CD4-positive, alpha-beta T cell (primary cell): ENCODE measurements at regions of chr19 and their contacts with region 1.

Region 1: DNA sequence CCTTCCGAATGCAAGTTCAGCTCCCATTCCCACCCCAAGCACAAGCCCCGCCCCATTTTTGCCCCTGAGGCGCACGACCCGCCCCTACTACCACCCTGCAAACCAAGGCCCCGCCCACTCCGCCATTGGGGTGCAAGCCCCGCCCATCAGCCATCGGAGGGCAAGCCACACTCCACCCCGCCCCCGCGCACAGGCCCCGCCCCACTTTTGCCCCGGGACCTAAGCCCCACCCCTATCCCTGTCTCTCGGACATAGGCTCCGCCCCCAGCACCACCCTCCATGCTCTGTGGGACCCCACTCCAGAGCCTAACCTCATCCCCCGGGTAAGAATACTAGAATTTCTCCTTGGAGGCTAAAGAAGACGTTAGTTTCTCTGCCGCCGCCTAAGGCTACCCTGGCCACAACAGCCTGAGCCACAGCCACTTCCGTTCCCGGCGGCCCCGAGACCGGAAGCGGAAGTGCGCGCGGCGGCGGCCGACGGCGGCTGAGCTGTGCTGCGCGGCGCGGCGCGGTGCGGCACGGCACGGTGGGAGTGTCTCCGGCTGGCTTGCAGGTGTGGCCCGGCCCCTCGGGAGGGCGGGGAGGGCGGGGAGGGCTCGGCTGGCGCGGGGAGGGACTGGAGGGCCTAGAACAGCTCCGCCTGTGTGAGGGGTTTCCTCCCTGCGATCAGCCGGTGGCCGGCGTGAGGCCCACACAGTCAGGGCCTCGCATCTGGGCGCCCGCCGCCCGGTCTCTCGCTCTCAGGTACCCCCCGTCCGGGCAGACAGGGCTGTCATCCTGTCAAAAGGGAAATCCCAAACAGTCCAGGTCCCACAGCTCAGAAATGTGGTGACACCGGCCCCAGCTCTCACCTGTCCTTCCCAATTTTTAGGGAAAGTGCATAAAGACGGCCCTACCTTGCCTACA is at the start of gene ZNF333:
- DNase-seq: peak; percentile 94 to 99 (median 98)
- ATAC-seq: peak; percentile 88
- H3K4me3 ChIP-seq: peak within 1 kb of the TSS; percentile 81
- H3K4me3 Mint-ChIP-seq: peak within 1 kb of the TSS; percentile 96
- H3K27ac ChIP-seq: peak within 1 kb of the TSS; percentile 87 to 98
- H3K27ac Mint-ChIP-seq: peak within 1 kb of the TSS; percentile 99
- H3K4me1 ChIP-seq: peaks cover 19% of the 10 kb centered on the region
- H3K4me1 Mint-ChIP-seq: peaks cover 31% of the 10 kb centered on the region
- H3K27me3 ChIP-seq: no peaks in the 10 kb centered on the region
- H3K27me3 Mint-ChIP-seq: no peaks in the 10 kb centered on the region
- CTCF ChIP-seq: no peak
- total RNA-seq, gene ZNF333: 15.5 to 17.6 TPM

Region 2: DNA sequence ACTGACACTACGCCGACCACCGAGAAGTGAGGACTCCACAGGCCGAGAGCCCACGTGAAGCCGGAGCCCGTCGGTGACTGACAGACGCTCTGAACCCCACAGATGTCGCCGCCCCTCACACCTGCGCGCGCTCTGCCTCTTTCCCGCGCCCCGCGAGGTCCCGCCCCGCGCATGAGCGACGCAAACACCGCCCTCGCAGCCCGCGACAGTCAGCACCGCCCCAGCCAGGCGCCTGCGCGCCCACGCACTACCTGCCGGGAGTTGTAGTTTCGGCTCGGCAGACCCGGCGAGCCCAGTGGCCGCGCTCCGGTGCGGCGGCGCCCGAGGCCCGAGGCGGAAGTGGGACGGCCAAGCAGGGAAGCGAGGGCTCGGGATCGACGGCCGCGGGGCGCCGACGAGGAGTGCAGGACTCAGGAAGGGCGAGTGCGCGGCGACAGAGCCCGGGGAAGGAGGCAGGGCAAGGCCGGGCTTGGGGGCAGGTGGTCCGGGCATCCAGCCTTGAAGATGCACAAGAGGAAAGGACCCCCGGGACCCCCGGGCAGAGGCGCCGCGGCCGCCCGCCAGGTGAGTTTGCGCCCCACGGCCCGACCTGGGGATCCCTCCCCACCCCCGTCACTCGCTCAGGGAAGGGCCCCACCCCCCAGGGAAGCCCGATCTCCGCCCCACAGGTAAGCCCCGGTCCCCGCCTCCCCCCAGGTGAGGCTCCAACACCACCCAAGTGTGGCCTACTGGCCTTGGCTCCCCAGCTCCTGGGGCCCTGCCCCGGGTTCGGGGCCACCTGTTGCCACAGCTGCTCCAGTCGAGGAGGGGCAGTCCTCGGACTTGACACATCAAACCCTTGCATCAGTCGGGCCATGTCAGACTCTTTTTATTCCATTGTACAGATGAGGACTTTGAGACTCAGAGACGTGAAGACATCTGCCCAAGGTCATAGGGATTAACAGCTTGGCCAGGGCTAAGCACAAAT is 783.6 kb before region 1 on chr19 and contains the starts of genes BRME1 and CC2D1A:
- CTCF ChIA-PET with region 1: no interaction called
- POLR2A ChIA-PET with region 1: no interaction called
- intact Hi-C with region 1: loop called in 1 of 2 experiments (anchors 5 kb)
- DNase-seq: peak; percentile 88 to 96 (median 92)
- ATAC-seq: peak; percentile 99
- H3K4me3 ChIP-seq: peak within 1 kb of the TSS; percentile 77
- H3K4me3 Mint-ChIP-seq: peak within 1 kb of the TSS; percentile 92
- H3K27ac ChIP-seq: peak within 1 kb of the TSS in 1 of 2 donors; percentile 49
- H3K27ac Mint-ChIP-seq: peak within 1 kb of the TSS; percentile 66
- H3K4me1 ChIP-seq: peaks cover 24% of the 10 kb centered on the region
- H3K4me1 Mint-ChIP-seq: peaks cover 13% of the 10 kb centered on the region
- H3K27me3 ChIP-seq: no peaks in the 10 kb centered on the region
- H3K27me3 Mint-ChIP-seq: no peaks in the 10 kb centered on the region
- CTCF ChIP-seq: no peak
- total RNA-seq, gene BRME1: 1.1 to 1.3 TPM
- total RNA-seq, gene CC2D1A: 16.4 to 16.9 TPM

Region 3: DNA sequence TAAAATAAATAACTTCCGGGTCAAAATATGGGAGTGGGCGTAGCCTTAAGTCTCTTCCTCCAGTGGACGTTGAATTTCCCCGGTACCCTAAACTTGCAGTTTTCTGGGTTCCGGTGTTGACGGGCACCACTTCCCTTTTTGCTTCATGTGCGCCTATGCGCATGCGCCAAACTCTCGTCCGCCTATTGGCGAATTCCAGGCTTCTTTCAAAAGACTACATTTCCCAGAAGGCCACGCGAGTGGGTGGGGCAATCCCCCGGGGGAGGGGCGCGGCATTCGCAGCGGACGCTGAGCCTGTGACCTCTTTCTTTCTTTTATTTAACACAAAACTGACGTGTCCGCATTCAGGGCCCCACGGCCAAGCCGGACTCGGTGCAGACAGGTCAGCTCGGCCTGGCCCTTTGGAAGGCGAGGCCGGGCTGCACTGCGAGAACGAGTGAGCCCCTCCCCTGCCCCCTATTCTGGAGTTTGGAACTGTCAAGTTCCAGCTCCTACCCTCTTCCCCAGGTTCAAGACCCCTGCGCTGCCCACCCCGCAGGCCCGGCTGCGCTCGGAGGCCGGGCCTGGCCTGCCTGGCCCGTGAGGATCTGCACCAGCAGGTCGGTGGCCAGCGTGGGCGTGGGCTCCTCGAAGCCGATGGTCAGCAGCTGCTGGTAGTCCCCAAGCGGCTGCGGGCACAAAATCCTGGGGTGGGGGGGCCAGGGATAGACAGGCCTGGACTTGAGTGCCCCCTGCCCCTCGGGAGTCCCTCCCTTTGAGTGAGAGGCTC is 608.3 kb before region 1 on chr19:
- CTCF ChIA-PET with region 1: no interaction called
- POLR2A ChIA-PET with region 1: no interaction called
- intact Hi-C with region 1: loop called in 1 of 2 experiments (anchors 10 kb)
- DNase-seq: peak; percentile 98 to 100 (median 99)
- ATAC-seq: peak; percentile 94
- H3K4me3 ChIP-seq: peak overlapping the region; percentile 81
- H3K4me3 Mint-ChIP-seq: peak overlapping the region; percentile 91
- H3K27ac ChIP-seq: peak overlapping the region; percentile 73 to 74
- H3K27ac Mint-ChIP-seq: peak overlapping the region; percentile 73
- H3K4me1 ChIP-seq: peaks cover 23% of the 10 kb centered on the region
- H3K4me1 Mint-ChIP-seq: peaks cover 14% of the 10 kb centered on the region
- H3K27me3 ChIP-seq: no peaks in the 10 kb centered on the region
- H3K27me3 Mint-ChIP-seq: no peaks in the 10 kb centered on the region
- CTCF ChIP-seq: no peak

Region 4: GRCh38 chr19:14496028-14496833 is 193.6 kb before region 1 on chr19 and contains the start of gene GIPC1:
- CTCF ChIA-PET with region 1: no interaction called
- POLR2A ChIA-PET with region 1: interaction called, 3 read pairs
- intact Hi-C with region 1: loop called in 1 of 2 experiments (anchors 10 kb)
- DNase-seq: peak; percentile 61 to 91 (median 78)
- ATAC-seq: peak; percentile 87
- H3K4me3 ChIP-seq: peak within 1 kb of the TSS; percentile 76
- H3K4me3 Mint-ChIP-seq: peak within 1 kb of the TSS; percentile 91
- H3K27ac ChIP-seq: peak within 1 kb of the TSS; percentile 56 to 70
- H3K27ac Mint-ChIP-seq: peak within 1 kb of the TSS; percentile 70
- H3K4me1 ChIP-seq: peaks cover 30% of the 10 kb centered on the region
- H3K4me1 Mint-ChIP-seq: peaks cover 38% of the 10 kb centered on the region
- H3K27me3 ChIP-seq: no peaks in the 10 kb centered on the region
- H3K27me3 Mint-ChIP-seq: no peaks in the 10 kb centered on the region
- CTCF ChIP-seq: no peak
- total RNA-seq, gene GIPC1: 17.8 to 21.0 TPM

Region 5: DNA sequence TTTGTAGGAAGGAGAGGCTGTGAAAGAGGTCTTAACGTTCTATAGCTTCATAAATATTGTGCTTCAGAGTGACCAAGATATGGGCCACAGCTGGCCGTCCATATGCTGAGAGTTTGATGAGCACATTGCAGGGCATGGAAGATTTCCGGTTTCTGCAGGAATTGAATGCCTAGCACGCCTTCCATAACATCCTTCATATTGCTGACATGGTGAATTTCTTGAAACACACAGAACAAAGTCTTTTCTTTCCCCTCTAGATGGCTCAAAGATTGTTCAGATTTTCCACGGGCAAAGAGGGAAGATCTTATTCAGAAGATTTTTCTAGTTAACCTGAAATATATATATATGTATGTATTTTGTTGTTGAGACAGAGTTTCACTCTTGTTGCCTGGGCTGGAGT is 46.1 kb after region 1 on chr19:
- CTCF ChIA-PET with region 1: no interaction called
- POLR2A ChIA-PET with region 1: no interaction called
- intact Hi-C with region 1: no loop called
- DNase-seq: no peak
- ATAC-seq: no peak
- H3K4me3 ChIP-seq: no peak overlapping the region
- H3K4me3 Mint-ChIP-seq: no peak overlapping the region
- H3K27ac ChIP-seq: no peak overlapping the region
- H3K27ac Mint-ChIP-seq: no peak overlapping the region
- H3K4me1 ChIP-seq: no peaks in the 10 kb centered on the region
- H3K4me1 Mint-ChIP-seq: no peaks in the 10 kb centered on the region
- H3K27me3 ChIP-seq: peaks cover 0 to 3% of the 10 kb centered on the region in 2 experiments
- H3K27me3 Mint-ChIP-seq: peaks cover 4% of the 10 kb centered on the region
- CTCF ChIP-seq: no peak